ENCODE measurements at regions of chr2 and their contacts with region 1.

Region 1: DNA sequence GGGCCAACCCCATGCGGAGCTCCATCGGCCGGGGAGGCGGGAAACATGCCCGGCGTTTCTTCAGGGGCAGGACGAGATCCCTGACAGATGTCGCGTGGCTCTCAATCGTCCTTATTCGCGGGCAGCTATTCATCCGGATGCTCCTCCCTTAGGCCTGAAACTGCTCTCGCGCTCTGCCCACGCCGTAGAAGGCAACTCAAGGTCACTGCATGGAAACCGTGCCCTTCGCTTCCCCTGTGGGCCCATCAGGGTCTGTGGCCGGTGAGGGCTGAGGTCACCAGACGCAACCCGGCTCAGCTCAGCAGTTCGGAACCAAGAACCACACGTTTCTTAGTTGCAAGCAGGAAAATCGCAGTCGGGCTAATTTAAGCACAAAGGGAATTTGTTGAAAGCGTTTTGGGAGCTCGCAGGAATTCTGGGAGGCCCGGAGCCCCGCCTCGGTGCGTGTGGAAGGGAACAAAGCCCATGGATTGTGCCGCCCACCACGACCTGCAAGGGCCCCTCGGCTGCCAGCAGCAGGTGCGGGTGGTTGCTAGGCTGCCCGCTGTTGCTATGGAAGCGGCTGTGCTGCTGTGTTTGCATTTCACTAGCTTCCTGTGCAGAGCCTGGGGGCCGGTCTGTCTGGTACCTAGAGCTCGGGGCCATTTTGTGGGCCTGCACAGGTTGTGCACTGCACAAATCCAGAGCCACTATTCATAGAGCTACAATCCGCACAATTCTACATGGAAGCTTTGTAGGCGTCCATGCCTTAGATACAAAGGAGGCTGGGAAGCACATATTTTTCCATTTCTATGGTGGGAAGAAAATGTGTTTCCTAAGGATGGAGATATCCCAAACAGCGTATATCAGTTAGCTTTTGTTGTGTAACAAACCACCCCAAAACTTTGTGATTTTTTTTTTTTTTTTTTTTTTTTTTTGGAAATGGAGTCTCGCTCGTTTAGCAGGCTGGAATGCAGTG is 6.0 kb upstream of the ALLC start:
- DNase-seq: peak; percentile 19
- H3K4me3 ChIP-seq: peak overlapping the region in 1 of 3 experiments; percentile 8
- H3K27ac ChIP-seq: no peak overlapping the region
- H3K4me1 ChIP-seq: peaks cover 2% of the 10 kb centered on the region
- H3K27me3 ChIP-seq: no peaks in the 10 kb centered on the region
- CTCF ChIP-seq: no peak
- POLR2A ChIP-seq: no peak

Region 2: DNA sequence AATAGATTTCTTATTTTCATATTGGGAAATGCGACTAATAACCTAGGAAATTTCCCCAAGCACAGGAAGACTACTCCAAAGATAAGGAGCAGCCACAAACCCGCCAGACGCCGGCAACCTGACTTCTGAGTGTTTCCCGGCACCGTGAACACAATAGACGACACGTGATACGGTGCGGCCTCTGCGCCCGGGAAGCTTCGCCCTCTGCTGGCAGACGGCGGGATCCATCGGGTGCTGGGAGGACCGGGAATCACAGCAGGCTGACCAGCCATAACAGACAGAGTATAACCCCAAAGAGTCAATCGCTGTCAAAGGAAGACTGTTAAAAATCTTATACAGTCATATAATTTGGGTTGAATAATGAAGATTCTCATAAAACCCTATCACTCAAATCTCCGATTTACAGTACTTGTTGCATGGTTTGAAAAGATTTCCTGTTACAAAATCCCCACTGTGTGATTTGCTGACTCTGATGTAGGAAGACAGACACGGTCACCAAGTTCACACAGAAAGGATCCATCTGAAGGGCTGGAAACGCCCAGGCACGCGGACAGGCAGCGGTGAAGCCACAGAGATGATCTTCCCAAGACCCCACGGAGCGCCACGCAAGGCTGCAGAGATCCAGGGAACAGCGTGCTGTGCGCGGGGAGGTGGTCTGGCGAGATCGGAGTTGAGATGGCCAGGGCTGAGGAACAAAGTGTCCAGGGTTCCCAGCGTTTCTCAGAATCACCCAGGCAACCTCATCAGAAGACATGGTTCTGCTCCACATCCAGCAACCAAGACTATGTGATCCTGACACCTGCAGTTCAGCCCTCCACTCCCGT is 348.2 kb before region 1 on chr2:
- CTCF ChIA-PET with region 1: no interaction called
- POLR2A ChIA-PET with region 1: no interaction called
- dilution Hi-C with region 1: no loop called
- intact Hi-C with region 1: loop called (anchors 5 kb)
- DNase-seq: peak; percentile 85
- H3K4me3 ChIP-seq: no peak overlapping the region
- H3K27ac ChIP-seq: peak overlapping the region; percentile 29
- H3K4me1 ChIP-seq: peaks cover 3% of the 10 kb centered on the region
- H3K27me3 ChIP-seq: no peaks in the 10 kb centered on the region
- CTCF ChIP-seq: peak; percentile 92 to 93
- POLR2A ChIP-seq: no peak

Region 3: GRCh38 chr2:3423492-3424175 is 228.3 kb before region 1 on chr2:
- CTCF ChIA-PET with region 1: interaction called, 41 read pairs
- POLR2A ChIA-PET with region 1: no interaction called
- dilution Hi-C with region 1: no loop called
- intact Hi-C with region 1: loop called (anchors 1 kb)
- DNase-seq: peak; percentile 63
- H3K4me3 ChIP-seq: no peak overlapping the region
- H3K27ac ChIP-seq: no peak overlapping the region
- H3K4me1 ChIP-seq: no peaks in the 10 kb centered on the region
- H3K27me3 ChIP-seq: no peaks in the 10 kb centered on the region
- CTCF ChIP-seq: peak; percentile 91 to 99
- POLR2A ChIP-seq: no peak

Region 4: DNA sequence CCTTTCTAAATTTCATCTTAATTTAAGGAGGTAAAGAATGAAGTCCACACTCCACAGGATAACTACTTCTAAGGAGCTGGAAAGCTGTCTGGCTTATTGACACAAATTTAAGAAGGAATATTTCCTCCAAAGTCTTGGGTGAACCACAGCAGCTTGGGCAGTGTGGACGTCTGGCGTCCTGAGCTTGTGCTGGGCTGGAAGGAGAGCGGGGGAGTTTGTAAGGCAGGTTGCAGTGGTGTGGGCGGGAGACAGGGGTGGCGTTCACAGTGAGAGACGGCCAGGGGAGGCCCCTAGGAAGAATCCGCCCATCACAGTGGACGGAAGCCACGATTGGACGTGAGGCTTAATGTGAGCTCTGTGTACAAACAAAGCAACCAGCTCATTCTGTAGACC is 158.4 kb before region 1 on chr2:
- CTCF ChIA-PET with region 1: no interaction called
- POLR2A ChIA-PET with region 1: no interaction called
- dilution Hi-C with region 1: no loop called
- intact Hi-C with region 1: no loop called
- DNase-seq: peak; percentile 51
- H3K4me3 ChIP-seq: no peak overlapping the region
- H3K27ac ChIP-seq: no peak overlapping the region
- H3K4me1 ChIP-seq: peaks cover 4% of the 10 kb centered on the region
- H3K27me3 ChIP-seq: no peaks in the 10 kb centered on the region
- CTCF ChIP-seq: no peak
- POLR2A ChIP-seq: no peak

Region 5: GRCh38 chr2:3558205-3559014 is 93.6 kb before region 1 on chr2 and contains the start of gene RNASEH1:
- CTCF ChIA-PET with region 1: no interaction called
- POLR2A ChIA-PET with region 1: no interaction called
- dilution Hi-C with region 1: no loop called
- intact Hi-C with region 1: loop called (anchors 1 kb)
- DNase-seq: peak; percentile 99
- H3K4me3 ChIP-seq: peak within 1 kb of the TSS; percentile 65 to 96 (median 90)
- H3K27ac ChIP-seq: peak within 1 kb of the TSS; percentile 80
- H3K4me1 ChIP-seq: peaks cover 15% of the 10 kb centered on the region
- H3K27me3 ChIP-seq: no peaks in the 10 kb centered on the region
- CTCF ChIP-seq: no peak
- POLR2A ChIP-seq: peak; percentile 90
- total RNA-seq, gene RNASEH1: 30.8 and 31.4 TPM in 2 replicates

Region 6: DNA sequence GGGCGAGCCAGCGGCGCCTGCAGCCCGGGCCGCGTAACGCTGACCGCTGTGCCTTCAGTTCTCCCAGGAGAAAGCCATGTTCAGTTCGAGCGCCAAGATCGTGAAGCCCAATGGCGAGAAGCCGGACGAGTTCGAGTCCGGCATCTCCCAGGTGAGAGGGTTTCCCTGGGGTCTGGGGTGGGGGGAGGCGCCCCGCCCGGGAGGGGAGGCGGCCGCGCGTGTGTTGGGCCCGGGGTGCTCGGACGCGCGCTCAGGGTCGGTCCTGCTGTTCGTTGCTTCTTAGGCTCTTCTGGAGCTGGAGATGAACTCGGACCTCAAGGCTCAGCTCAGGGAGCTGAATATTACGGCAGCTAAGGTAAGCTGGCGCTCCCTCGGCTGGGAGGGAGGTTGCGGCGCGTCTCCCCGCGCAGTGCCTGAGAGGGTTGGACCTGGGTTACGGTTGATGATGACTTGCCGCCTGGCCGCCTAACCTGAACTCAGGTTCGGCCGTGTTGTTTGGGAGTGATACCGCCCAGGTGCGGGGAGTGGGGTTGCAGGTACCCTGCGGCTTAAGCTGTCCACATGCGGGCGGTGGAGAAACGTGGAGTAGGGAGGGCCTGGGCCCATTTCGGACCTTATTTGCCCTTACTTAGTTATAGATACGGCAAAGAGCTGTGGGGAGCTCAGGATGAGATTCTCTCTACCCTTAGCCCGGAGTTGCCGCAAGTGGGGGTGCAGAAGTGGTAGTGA is 76.3 kb before region 1 on chr2:
- CTCF ChIA-PET with region 1: no interaction called
- POLR2A ChIA-PET with region 1: no interaction called
- dilution Hi-C with region 1: no loop called
- intact Hi-C with region 1: loop called (anchors 5 kb)
- DNase-seq: peak; percentile 27
- H3K4me3 ChIP-seq: peak overlapping the region; percentile 37 to 82 (median 73)
- H3K27ac ChIP-seq: peak overlapping the region; percentile 54
- H3K4me1 ChIP-seq: peaks cover 31% of the 10 kb centered on the region
- H3K27me3 ChIP-seq: no peaks in the 10 kb centered on the region
- CTCF ChIP-seq: no peak
- POLR2A ChIP-seq: no peak

Region 7: GRCh38 chr2:3594493-3595281 is 57.3 kb before region 1 on chr2 and contains the start of gene COLEC11:
- CTCF ChIA-PET with region 1: interaction called, 3 read pairs
- POLR2A ChIA-PET with region 1: no interaction called
- dilution Hi-C with region 1: no loop called
- intact Hi-C with region 1: loop called (anchors 2 kb)
- DNase-seq: peak; percentile 33
- H3K4me3 ChIP-seq: no peak within 1 kb of the TSS
- H3K27ac ChIP-seq: no peak within 1 kb of the TSS
- H3K4me1 ChIP-seq: peaks cover 4% of the 10 kb centered on the region
- H3K27me3 ChIP-seq: no peaks in the 10 kb centered on the region
- CTCF ChIP-seq: peak in 1 of 2 donors; percentile 43
- POLR2A ChIP-seq: no peak
- total RNA-seq, gene COLEC11: not detected in 2 replicates

Region 8: DNA sequence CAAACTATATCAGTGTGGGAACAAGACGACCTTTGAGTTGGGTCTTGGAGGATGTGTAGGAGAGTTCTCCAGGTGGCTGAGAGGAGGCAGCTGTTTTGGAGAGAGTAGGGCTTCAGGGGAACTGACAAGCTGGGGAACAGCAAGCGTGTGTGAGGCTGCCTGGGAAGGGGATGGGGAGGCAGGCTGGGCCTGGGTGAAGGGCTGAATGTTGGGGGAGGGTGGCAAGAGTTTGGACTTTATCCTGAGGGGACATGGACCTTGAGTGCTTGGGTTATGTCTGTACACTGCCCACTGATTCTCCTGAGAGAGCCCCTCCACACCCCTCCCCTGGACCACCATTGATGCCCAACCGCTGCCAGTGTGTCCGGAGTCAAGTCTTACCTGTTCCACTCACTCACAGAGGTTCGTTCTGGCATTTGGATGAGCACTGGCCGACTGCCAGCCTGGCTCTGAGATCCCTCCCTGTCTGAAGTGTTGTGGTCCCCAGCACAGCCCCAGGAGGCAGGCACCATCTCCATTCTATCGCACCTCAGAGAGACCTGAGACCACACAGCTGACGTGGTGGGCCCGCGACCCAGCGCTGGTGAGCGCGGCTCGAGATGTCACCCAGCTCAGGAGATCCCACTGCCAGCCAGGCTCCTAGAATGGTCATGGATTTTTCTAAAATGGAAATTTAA is 110.9 kb after region 1 on chr2:
- CTCF ChIA-PET with region 1: no interaction called
- POLR2A ChIA-PET with region 1: no interaction called
- dilution Hi-C with region 1: no loop called
- intact Hi-C with region 1: no loop called
- DNase-seq: no peak
- H3K4me3 ChIP-seq: no peak overlapping the region
- H3K27ac ChIP-seq: no peak overlapping the region
- H3K4me1 ChIP-seq: no peaks in the 10 kb centered on the region
- H3K27me3 ChIP-seq: no peaks in the 10 kb centered on the region
- CTCF ChIP-seq: no peak
- POLR2A ChIP-seq: no peak

Region 9: DNA sequence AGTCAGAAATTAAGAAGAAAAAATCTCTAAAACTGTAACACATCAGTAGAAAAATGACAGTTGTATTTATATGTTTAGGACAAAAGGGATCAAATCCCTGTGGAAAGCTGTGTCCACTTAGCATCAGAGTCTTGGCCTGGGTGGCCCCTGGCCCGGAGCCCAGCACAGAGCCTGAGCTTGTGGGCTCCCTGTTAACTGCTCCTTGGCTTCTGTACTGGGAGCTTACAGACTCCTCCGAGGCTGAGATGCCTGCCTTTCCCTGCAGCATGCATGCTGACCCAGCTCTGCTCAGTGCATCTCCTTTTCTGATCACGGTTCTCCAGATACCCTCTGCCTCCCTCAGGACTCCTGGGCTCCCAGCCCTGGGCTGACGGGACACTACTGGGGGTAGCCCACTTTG is 149.5 kb after region 1 on chr2:
- CTCF ChIA-PET with region 1: no interaction called
- POLR2A ChIA-PET with region 1: no interaction called
- dilution Hi-C with region 1: no loop called
- intact Hi-C with region 1: no loop called
- DNase-seq: no peak
- H3K4me3 ChIP-seq: no peak overlapping the region
- H3K27ac ChIP-seq: no peak overlapping the region
- H3K4me1 ChIP-seq: no peaks in the 10 kb centered on the region
- H3K27me3 ChIP-seq: no peaks in the 10 kb centered on the region
- CTCF ChIP-seq: no peak
- POLR2A ChIP-seq: no peak

Measured in endothelial cell of umbilical vein (primary cell).